ENCODE measurements at regions of chr12 and their contacts with region 1.

Region 1: DNA sequence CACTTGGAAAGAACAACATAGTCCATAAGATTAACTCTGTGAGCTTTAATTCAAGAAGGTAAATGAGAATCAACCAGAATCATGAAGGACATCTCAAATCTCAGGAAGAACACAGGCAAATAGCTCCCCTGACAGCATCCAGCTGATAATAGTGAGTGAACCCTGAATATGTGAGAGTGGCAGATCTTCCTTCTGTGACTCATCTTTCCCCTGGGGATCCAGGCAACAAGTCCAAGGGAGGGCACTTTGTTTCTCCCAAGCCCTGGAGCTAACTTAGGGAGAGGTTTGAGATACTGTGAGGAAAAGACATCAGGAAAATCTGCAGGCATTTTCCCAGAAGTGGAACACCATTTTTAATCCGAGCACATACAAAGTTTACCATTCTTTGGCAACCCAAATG is 763.9 kb upstream of the MGAT4C start:
- DNase-seq: no peak
- ATAC-seq: no peak
- H3K4me3 ChIP-seq: no peak overlapping the region
- H3K4me3 Mint-ChIP-seq: no peak overlapping the region
- H3K27ac ChIP-seq: no peak overlapping the region
- H3K27ac Mint-ChIP-seq: no peak overlapping the region
- H3K4me1 ChIP-seq: no peaks in the 10 kb centered on the region
- H3K4me1 Mint-ChIP-seq: no peaks in the 10 kb centered on the region
- H3K27me3 ChIP-seq: no peaks in the 10 kb centered on the region
- H3K27me3 Mint-ChIP-seq: no peaks in the 10 kb centered on the region
- CTCF ChIP-seq: no peak

Region 2: DNA sequence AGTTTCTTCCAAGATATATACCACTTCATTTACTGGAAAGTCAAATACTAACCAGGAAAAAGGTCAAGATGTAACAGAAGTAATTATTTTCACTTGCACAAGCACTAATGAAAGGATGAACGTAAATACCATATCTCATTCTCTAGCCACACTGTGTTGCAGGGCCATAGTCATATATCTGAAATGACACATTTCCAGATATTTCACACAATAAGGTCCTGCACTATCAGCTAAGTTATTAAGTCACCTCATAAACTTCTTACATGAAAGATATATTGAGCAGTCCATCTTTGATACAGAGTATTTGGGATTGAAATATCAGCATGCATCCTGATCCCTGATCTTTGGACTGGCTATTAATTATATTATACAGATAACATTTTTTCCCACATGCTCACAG is 19.5 kb after region 1 on chr12:
- CTCF ChIA-PET with region 1: no interaction called
- POLR2A ChIA-PET with region 1: no interaction called
- intact Hi-C with region 1: loop called (anchors 1 kb)
- DNase-seq: no peak
- ATAC-seq: no peak
- H3K4me3 ChIP-seq: no peak overlapping the region
- H3K4me3 Mint-ChIP-seq: no peak overlapping the region
- H3K27ac ChIP-seq: no peak overlapping the region
- H3K27ac Mint-ChIP-seq: no peak overlapping the region
- H3K4me1 ChIP-seq: no peaks in the 10 kb centered on the region
- H3K4me1 Mint-ChIP-seq: no peaks in the 10 kb centered on the region
- H3K27me3 ChIP-seq: no peaks in the 10 kb centered on the region
- H3K27me3 Mint-ChIP-seq: no peaks in the 10 kb centered on the region
- CTCF ChIP-seq: no peak

Region 3: GRCh38 chr12:88083634-88084033 is 1063.6 kb after region 1 on chr12:
- CTCF ChIA-PET with region 1: no interaction called
- POLR2A ChIA-PET with region 1: no interaction called
- intact Hi-C with region 1: no loop called
- DNase-seq: no peak
- ATAC-seq: no peak
- H3K4me3 ChIP-seq: no peak overlapping the region
- H3K4me3 Mint-ChIP-seq: no peak overlapping the region
- H3K27ac ChIP-seq: no peak overlapping the region
- H3K27ac Mint-ChIP-seq: no peak overlapping the region
- H3K4me1 ChIP-seq: no peaks in the 10 kb centered on the region
- H3K4me1 Mint-ChIP-seq: no peaks in the 10 kb centered on the region
- H3K27me3 ChIP-seq: no peaks in the 10 kb centered on the region
- H3K27me3 Mint-ChIP-seq: no peaks in the 10 kb centered on the region
- CTCF ChIP-seq: no peak

Measured in CD4-positive, alpha-beta T cell (primary cell).